Transverse colon (tissue), 4 donors: ENCODE measurements at regions of chr3 and their contacts with region 1.

Region 1: DNA sequence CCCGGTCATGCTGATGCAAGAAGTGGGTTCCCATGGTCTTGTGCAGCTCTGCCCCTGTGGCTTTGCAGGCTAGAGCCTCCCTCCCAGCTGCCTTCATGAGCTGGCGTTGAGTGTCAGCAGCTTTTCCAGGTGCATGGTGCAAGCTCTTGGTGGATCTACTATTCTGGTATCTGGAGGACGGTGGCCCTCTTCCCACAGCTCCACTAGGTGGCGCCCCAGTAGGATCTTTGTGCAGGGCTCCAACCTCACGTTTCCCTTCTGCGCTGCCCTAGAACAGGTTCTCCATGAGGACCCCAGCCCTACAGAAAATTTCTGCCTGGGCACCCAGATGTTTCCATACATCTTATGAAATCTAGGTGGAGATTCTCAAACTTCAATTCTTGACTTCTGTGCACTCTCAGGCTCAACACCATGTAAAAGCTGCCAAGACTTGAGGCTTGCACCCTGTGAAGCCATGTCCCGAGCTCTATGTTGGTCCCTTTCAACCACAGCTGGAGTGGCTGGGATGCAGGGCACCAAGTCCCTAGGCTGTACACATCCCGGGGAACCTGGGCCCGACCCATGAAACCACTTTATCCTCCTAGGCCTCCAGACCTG is 238.4 kb upstream of the MDFIC2 start:
- DNase-seq: peak; percentile 73
- H3K4me3 ChIP-seq: no peak overlapping the region
- H3K27ac ChIP-seq: no peak overlapping the region
- H3K4me1 ChIP-seq: no peaks in the 10 kb centered on the region
- H3K27me3 ChIP-seq: no peaks in the 10 kb centered on the region
- CTCF ChIP-seq: peak; percentile 57 to 81 (median 77)
- EP300 ChIP-seq: no peak
- POLR2A ChIP-seq: no peak

Region 2: GRCh38 chr3:70780790-70781189 is 230.0 kb after region 1 on chr3:
- in situ Hi-C with region 1: no loop called
- intact Hi-C with region 1: no loop called
- DNase-seq: no peak
- H3K4me3 ChIP-seq: no peak overlapping the region
- H3K27ac ChIP-seq: no peak overlapping the region
- H3K4me1 ChIP-seq: no peaks in the 10 kb centered on the region
- H3K27me3 ChIP-seq: no peaks in the 10 kb centered on the region
- CTCF ChIP-seq: no peak
- EP300 ChIP-seq: no peak
- POLR2A ChIP-seq: no peak

Region 3: GRCh38 chr3:71641674-71642073 is 1090.9 kb after region 1 on chr3:
- in situ Hi-C with region 1: loop called in 1 of 4 experiments (anchors 25 kb)
- intact Hi-C with region 1: no loop called
- DNase-seq: no peak
- H3K4me3 ChIP-seq: no peak overlapping the region
- H3K27ac ChIP-seq: no peak overlapping the region
- H3K4me1 ChIP-seq: no peaks in the 10 kb centered on the region
- H3K27me3 ChIP-seq: no peaks in the 10 kb centered on the region
- CTCF ChIP-seq: no peak
- EP300 ChIP-seq: no peak
- POLR2A ChIP-seq: no peak